ENCODE measurements at regions of chr7 and their contacts with region 1.

Region 1: DNA sequence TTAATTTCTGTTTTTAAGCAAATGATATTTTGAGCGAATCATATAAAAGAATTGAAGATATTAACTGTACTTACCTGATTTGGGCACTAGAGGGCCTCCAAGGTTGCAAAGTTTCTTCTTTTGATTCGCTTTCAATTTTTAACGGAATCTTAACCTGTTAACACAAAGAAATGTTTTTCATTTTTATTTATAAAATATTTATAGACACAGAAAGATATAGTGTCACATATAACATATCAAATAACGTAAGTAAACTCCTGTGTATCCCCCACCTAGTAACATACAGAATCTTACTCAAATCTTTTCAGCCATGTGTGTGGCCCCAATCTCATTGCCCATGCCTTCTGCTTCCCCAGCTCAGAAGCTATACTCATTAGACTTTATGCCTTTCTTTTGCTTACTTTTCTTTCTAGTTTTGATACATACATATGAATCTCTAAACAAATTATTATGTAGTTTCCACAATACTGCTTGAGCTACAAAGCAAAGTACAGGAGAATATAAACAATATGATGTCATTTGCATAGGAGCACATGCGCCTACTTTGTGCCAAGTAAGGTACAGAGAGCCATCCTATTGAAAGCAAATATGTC is 49.5 kb upstream of the ZPBP start:
- DNase-seq: no peak
- ATAC-seq: peak; percentile 62
- H3K4me3 Mint-ChIP-seq: peak overlapping the region; percentile 72
- H3K27ac Mint-ChIP-seq: peak overlapping the region; percentile 86
- H3K4me1 Mint-ChIP-seq: peaks cover 58% of the 10 kb centered on the region
- H3K27me3 Mint-ChIP-seq: no peaks in the 10 kb centered on the region
- CTCF ChIP-seq: no peak

Region 2: GRCh38 chr7:50119815-50120637 is 22.5 kb before region 1 on chr7:
- CTCF ChIA-PET with region 1: interaction called, 3 read pairs
- POLR2A ChIA-PET with region 1: no interaction called
- intact Hi-C with region 1: loop called (anchors 2 kb)
- DNase-seq: no peak
- ATAC-seq: peak; percentile 86
- H3K4me3 Mint-ChIP-seq: no peak overlapping the region
- H3K27ac Mint-ChIP-seq: peak overlapping the region; percentile 43
- H3K4me1 Mint-ChIP-seq: peaks cover 21% of the 10 kb centered on the region
- H3K27me3 Mint-ChIP-seq: no peaks in the 10 kb centered on the region
- CTCF ChIP-seq: no peak

Region 3: GRCh38 chr7:50358779-50359178 is 216.3 kb after region 1 on chr7:
- CTCF ChIA-PET with region 1: no interaction called
- POLR2A ChIA-PET with region 1: no interaction called
- intact Hi-C with region 1: no loop called
- DNase-seq: no peak
- ATAC-seq: no peak
- H3K4me3 Mint-ChIP-seq: no peak overlapping the region
- H3K27ac Mint-ChIP-seq: peak overlapping the region; percentile 80
- H3K4me1 Mint-ChIP-seq: peaks cover 94% of the 10 kb centered on the region
- H3K27me3 Mint-ChIP-seq: no peaks in the 10 kb centered on the region
- CTCF ChIP-seq: no peak

Region 4: GRCh38 chr7:50449881-50450589 is 307.5 kb after region 1 on chr7 and contains the start of gene FIGNL1:
- CTCF ChIA-PET with region 1: interaction called, 5 read pairs
- POLR2A ChIA-PET with region 1: no interaction called
- intact Hi-C with region 1: loop called (anchors 1 kb)
- DNase-seq: peak; percentile 82
- ATAC-seq: peak; percentile 97
- H3K4me3 Mint-ChIP-seq: peak within 1 kb of the TSS; percentile 91
- H3K27ac Mint-ChIP-seq: peak within 1 kb of the TSS; percentile 89
- H3K4me1 Mint-ChIP-seq: peaks cover 24% of the 10 kb centered on the region
- H3K27me3 Mint-ChIP-seq: no peaks in the 10 kb centered on the region
- CTCF ChIP-seq: no peak
- total RNA-seq, gene FIGNL1: 13.2 and 15.4 TPM in 2 replicates

Region 5: GRCh38 chr7:50632561-50633413 is 490.3 kb after region 1 on chr7:
- CTCF ChIA-PET with region 1: interaction called, 5 read pairs
- POLR2A ChIA-PET with region 1: no interaction called
- intact Hi-C with region 1: loop called (anchors 1 kb)
- DNase-seq: peak; percentile 32
- ATAC-seq: peak; percentile 79
- H3K4me3 Mint-ChIP-seq: no peak overlapping the region
- H3K27ac Mint-ChIP-seq: no peak overlapping the region
- H3K4me1 Mint-ChIP-seq: peaks cover 14% of the 10 kb centered on the region
- H3K27me3 Mint-ChIP-seq: peaks cover 20% of the 10 kb centered on the region
- CTCF ChIP-seq: no peak

Region 6: GRCh38 chr7:51162724-51163329 is 1020.3 kb after region 1 on chr7:
- CTCF ChIA-PET with region 1: interaction called, 6 read pairs
- POLR2A ChIA-PET with region 1: no interaction called
- intact Hi-C with region 1: loop called (anchors 1 kb)
- DNase-seq: peak; percentile 18
- ATAC-seq: peak; percentile 77
- H3K4me3 Mint-ChIP-seq: no peak overlapping the region
- H3K27ac Mint-ChIP-seq: no peak overlapping the region
- H3K4me1 Mint-ChIP-seq: peaks cover 7% of the 10 kb centered on the region
- H3K27me3 Mint-ChIP-seq: peaks cover 10% of the 10 kb centered on the region
- CTCF ChIP-seq: peak; percentile 20

Measured in activated B cell treated with CpG ODN at 0.5 μM for 24 hours (primary cell).